Posterior vena cava (tissue), 2 donors: ENCODE measurements at regions of chr1 and their contacts with region 1.

Region 1: DNA sequence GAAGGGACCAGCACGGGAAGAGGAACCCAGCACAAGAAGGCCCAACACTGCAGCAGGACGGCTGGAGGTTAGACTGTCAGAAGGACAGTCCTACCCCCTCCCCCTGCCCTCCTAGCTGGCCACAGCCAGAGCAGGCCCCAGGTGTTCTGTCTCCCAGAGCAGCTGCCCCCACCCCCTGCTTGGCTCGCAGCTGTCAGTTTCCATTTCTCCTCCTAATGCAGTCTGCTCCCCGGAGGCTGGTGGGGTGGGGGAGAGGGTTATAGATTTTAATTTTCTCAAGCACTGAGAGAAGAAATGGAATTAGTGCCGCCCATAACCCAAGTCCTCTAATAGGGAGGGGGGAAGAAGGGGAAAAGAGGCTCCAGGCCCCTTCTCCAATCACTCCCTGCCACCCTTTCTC is 13.0 kb upstream of the PEAR1 start:
- DNase-seq: no peak

Region 2: DNA sequence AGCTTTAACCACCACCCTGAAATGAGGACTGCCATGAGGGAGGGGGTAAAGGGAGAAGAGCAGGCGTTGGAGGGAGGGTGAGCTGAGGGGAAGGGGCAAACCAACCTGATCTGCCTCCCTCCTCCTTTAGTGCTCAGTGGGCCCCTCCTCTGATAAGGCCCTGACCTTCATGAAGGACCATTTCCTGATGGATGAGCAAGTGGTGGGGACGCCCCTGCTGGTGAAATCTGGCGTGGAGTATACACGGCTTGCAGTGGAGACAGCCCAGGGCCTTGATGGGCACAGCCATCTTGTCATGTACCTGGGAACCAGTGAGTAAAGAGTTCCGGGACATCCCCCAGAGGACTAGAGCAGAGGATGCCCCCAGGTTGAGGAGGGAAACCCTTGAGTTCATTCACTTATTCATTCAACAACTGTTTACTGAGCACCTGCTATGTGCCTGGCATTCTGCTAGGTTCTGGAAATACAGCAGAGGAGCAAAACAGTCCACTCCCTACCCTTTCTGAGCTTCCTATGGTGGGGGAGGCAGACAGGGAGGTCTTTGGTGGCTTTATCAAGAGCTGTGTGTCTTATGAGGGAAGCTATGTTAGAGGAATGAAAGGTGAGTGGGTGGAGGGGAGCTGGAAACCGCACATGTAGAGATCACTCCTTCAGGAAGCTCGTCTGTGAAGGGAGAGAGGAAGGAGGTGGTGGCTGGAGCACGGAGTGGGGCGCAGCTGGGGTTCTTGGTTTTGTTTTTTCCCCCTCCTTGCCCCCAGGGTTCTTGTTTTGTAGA is 707.6 kb before region 1 on chr1:
- intact Hi-C with region 1: no loop called
- DNase-seq: no peak

Region 3: DNA sequence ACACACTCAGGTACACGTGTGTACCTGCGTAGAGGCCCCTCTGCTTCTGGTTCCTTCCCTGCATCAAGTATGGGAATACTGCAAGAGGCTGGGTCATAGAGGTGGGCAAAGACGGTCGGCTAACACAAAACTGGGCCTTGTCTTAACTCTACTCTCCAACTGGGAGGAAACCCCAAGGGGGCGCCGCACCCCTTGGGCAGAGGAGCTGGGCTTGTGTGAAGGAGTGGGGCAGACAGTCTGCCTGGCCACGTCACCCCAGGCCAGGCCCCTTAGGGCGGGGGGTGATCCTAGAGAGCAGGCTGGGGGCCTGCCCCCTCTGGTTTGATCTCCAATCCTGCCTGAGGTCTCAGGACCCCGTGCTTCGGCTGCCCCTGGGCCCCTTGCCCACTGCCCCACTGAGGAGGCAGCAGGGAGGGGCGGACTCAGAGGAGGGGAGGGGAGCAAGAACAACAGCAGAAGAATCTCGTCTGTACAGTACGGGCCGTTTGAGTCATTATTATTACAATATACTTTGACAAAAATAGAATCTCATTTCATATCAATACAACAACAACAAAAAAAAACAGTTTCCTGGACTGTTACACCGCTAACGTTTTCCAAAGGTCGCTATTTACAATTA is 414.6 kb before region 1 on chr1:
- intact Hi-C with region 1: no loop called
- DNase-seq: no peak

Region 4: GRCh38 chr1:156816561-156817328 is 63.7 kb before region 1 on chr1 and contains the start of gene SH2D2A:
- intact Hi-C with region 1: loop called in 1 of 2 experiments (anchors 1 kb)
- DNase-seq: peak; percentile 87
- total RNA-seq, gene SH2D2A: 3.2 to 3.4 TPM

Region 5: GRCh38 chr1:157240495-157241184 is 360.2 kb after region 1 on chr1:
- intact Hi-C with region 1: no loop called
- DNase-seq: no peak